HEK293T (cell line): ENCODE measurements at regions of chrX and their contacts with region 1.

Region 1: GRCh38 chrX:71210819-71211218 is 12.2 kb upstream of the GJB1 start:
- DNase-seq: no peak

Region 2: GRCh38 chrX:71198066-71198465 is 12.8 kb before region 1 on chrX:
- CTCF ChIA-PET with region 1: interaction called, 11 read pairs
- POLR2A ChIA-PET with region 1: no interaction called
- DNase-seq: no peak

Region 3: DNA sequence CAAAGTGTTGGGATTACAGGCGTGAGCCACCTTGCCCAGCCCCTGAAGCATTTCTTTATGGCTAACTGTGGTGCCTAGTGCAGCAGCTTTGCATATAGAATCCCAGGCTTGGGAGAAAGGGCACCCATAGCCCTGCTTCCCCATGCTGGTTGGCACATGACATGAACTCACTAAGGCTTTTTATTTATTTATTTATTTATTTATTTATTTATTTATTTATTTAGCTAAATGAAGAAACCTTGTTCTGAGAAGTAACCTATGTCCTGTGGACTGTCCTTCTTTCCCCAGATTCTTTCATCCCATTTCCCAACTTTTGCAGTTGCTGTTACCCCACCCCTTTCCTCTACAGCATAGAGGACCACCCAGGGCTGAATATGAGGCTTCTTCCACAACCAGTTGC is 10.3 kb after region 1 on chrX:
- CTCF ChIA-PET with region 1: no interaction called
- POLR2A ChIA-PET with region 1: no interaction called
- DNase-seq: no peak

Region 4: GRCh38 chrX:71236836-71237235 is 26.0 kb after region 1 on chrX:
- CTCF ChIA-PET with region 1: no interaction called
- POLR2A ChIA-PET with region 1: no interaction called
- DNase-seq: no peak

Region 5: DNA sequence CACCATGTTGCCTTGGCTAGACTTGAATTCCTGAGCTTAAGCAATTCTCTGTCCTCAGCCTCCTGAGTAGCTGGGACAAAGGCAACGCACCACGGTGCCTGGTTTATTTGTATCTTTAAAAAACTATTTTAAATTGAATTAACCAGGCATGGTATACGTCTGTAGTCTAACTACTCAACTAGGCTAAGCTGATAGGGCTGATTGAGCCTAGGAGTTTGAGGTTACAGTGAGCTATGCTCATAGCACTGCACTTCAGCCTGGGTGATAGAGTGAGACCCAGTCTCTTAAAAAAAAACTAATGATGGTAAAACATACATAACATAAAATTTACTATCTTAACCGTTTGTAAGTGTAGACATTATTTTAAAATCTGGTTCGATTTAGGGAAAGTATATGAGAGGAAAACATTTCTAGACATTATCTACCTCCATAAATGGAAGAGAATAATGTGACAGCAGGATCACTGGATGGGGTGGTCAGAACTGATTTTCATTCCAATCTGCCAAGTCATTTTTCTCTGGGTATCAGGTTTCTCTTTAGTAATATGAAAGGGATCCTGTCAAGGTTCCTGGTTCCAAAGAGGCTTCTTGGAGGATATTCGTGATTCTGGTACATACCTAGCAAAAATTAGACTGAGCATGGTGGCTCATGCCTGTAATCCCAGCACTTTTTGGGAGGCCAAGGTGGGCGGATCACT is 82.0 kb after region 1 on chrX:
- CTCF ChIA-PET with region 1: no interaction called
- POLR2A ChIA-PET with region 1: no interaction called
- DNase-seq: no peak

Region 6: DNA sequence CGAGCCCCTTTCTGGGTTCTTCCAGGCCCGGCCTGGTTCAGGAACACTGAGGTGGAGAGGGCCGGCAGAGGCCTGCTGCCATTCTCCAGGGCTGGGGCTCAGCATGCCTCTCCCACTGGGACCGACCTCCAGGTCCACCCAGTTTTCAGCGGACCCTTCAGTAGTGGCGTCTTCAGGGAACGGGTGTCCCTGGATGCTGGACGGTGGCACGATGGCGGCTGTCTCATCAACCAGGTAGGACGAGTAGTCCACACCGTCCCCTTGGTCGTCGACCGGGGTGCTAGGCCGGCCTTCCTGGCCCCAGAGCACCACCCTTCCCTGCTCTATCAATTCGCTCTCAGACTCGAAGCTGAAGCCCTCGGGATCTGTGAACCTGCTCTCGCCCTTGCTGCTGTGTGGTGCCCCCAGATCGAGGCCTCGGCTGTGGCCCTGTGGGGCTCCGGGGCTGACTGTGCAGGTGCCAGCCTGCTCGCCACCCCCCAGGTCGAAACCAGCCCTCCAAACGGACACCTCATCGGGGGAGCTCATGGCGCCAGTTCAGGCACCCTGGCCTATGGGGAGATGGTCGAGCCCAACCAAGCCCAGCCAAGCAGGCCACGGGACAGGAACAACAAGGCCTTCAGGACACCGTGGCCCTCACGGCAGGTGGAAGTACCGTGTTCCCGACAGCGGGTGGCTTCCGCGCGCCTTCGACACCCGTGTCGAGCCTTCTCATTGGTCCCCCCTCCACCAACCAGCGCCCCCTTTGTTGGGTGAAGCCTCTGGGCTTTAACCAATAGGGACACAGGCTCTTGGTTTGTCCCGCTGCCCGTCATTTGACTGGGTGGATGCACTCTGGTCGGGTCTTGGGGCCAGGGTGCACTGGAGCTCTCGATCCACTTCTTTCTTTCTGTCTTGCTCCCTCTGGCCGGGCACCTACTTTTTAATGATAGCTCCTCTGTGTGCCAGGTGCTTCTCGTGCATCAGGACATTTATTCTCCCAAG is 455.7 kb after region 1 on chrX:
- CTCF ChIA-PET with region 1: no interaction called
- POLR2A ChIA-PET with region 1: no interaction called
- DNase-seq: no peak